ENCODE measurements at regions of chr17 and their contacts with region 1.

Region 1: DNA sequence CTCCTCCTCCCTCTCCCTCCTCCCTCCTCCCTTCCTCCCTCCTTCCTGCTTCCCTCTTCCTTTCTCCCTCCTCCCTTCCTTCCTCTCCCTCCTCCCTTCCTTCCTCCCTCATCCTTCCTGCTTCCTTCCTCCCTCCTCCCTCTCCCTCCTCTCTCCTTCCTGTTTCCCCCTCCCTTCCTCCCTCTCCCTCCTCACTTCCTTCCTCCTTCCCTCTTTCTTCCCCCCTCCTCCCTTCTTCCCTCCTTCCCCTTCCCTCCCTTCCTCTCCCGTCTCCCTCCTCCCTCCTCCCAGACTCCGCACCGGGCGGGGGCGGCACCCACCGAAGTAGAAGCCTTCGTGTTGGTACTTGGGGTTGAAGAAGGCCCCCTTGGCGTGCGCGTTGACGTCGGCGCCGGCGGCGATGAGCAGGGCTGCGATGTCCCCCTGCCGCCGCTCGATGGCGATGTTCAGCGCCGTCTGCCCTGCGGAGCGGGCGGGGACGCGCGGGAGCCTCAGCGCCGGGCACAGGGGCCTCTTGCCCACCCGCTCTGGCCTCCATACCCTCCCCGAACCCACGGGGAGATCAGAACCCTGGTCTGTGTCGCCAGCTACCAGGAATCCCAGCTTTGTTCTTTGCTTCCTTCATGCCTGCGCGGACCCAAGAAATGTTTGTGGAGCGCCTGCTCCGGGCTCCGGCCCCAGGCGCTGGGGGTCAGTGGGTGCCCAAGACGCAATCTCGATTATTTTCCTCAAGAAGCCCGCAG is 22.2 kb downstream of the TRPV3 start:
- DNase-seq: no peak
- H3K4me3 ChIP-seq: no peak overlapping the region
- H3K4me3 Mint-ChIP-seq: no peak overlapping the region
- H3K27ac Mint-ChIP-seq: no peak overlapping the region
- H3K4me1 ChIP-seq: peaks cover 19% of the 10 kb centered on the region
- H3K4me1 Mint-ChIP-seq: peaks cover 7% of the 10 kb centered on the region
- H3K27me3 ChIP-seq: no peaks in the 10 kb centered on the region
- H3K27me3 Mint-ChIP-seq: no peaks in the 10 kb centered on the region
- CTCF ChIP-seq: no peak

Region 2: GRCh38 chr17:3474212-3474611 is 61.2 kb before region 1 on chr17:
- CTCF ChIA-PET with region 1: no interaction called
- POLR2A ChIA-PET with region 1: no interaction called
- intact Hi-C with region 1: loop called (anchors 10 kb)
- DNase-seq: peak in 1 of 2 experiments; percentile 47
- H3K4me3 ChIP-seq: no peak overlapping the region
- H3K4me3 Mint-ChIP-seq: peak overlapping the region; percentile 37
- H3K27ac Mint-ChIP-seq: peak overlapping the region; percentile 49
- H3K4me1 ChIP-seq: peaks cover 37% of the 10 kb centered on the region
- H3K4me1 Mint-ChIP-seq: peaks cover 36% of the 10 kb centered on the region
- H3K27me3 ChIP-seq: no peaks in the 10 kb centered on the region
- H3K27me3 Mint-ChIP-seq: no peaks in the 10 kb centered on the region
- CTCF ChIP-seq: no peak